Activated CD4-positive, alpha-beta T cell treated with anti-CD3 and anti-CD28 coated beads for 36 hours (primary cell): ENCODE measurements at regions of chr11 and their contacts with region 1.

Region 1: DNA sequence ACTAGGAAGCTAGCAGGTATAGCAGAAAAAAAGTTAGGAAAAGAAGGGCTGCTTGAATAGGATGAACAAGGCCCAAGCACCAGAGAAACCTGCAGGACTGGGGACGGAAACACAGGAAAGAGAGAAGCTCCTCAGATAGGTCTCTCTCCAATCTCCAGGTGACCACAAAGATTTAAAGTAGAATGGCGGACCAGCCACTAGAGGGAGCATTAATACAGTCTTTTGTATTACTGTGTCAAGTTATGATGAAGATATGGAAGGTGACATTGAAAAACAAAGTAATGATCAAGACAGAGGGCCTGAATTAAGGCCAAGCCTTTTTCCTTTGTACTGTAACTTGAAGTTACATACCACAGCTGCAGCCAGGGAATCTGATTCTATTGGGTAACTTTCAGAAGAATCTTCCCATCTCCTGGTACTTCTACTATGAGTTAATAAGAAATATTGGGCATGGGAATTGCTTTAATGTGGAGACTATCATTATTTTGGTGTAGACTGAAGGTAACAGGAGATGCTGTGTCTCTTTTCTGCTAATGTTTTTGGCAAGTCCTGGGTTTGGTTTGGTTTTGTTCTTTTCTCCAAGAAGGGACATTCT is 33.8 kb downstream of the OR2AG2 start:
- DNase-seq: peak; percentile 76
- ATAC-seq: peak; percentile 52
- H3K4me3 Mint-ChIP-seq: no peak overlapping the region
- H3K27ac Mint-ChIP-seq: peak overlapping the region; percentile 73
- H3K4me1 Mint-ChIP-seq: peaks cover 94% of the 10 kb centered on the region
- H3K27me3 Mint-ChIP-seq: no peaks in the 10 kb centered on the region

Region 2: DNA sequence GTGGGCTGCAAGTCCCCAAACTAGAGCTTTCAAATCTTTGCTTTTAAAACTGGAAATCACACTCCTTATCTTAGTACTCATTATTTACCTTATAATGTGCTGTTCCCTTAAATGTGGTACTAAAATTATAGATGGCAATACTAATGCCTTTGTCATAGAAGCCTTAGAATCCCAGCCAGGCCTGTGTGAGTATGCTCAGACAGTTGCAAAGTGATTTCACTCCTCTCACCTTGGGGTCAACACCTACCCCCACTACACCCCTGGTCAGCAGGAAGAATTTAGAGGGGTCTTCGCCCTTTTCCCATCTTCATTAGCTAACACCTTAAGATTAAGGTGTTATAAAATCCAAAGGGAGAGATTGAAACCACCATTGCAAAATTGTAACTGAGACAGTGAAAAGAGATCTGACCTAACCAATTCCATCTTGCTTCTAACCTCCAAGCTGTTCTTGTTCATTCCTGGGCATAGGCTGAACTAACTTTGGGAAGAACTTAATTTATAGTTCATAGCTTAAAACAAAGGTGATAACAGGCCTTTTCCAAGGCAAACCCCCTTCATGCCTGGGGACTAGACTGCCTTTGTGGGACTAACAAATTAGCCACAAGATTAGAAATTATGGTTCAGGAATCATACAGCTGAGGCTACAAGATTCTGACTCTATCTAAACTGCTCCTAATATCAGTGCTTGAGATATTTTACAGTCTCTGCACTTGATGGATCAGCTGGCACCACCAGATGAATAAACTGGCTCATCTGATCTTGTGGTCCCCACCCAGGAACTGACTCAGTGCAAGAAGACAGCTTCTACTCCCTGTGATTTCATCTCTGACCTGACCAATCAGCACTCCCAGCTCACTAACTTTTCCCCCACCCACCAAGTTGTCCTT is 44.4 kb before region 1 on chr11:
- CTCF ChIA-PET with region 1: interaction called, 11 read pairs
- POLR2A ChIA-PET with region 1: no interaction called
- intact Hi-C with region 1: no loop called
- DNase-seq: peak; percentile 75
- ATAC-seq: peak; percentile 92
- H3K4me3 Mint-ChIP-seq: no peak overlapping the region
- H3K27ac Mint-ChIP-seq: peak overlapping the region; percentile 20
- H3K4me1 Mint-ChIP-seq: peaks cover 32% of the 10 kb centered on the region
- H3K27me3 Mint-ChIP-seq: no peaks in the 10 kb centered on the region

Region 3: DNA sequence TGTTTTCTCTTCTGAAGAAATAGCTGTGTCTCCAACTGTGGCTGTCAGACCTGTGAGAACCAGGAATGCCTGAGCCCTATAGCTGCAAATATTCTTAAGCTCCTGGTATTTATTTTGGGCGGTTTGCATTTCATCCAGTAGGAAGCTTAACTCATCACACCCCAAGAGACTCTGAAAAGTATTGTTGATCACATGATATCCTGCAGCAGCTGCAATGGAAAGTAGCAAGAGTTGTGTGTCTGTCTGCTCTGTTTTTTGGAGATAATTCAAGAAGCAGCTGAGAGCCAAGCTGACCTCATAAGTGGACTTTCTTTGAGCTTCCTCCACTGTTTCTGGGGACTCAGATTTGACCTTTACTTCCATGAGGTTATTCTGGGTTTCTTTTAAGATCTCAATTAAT is 18.4 kb before region 1 on chr11:
- CTCF ChIA-PET with region 1: interaction called, 57 read pairs
- POLR2A ChIA-PET with region 1: interaction called, 3 read pairs
- intact Hi-C with region 1: no loop called
- DNase-seq: no peak
- ATAC-seq: no peak
- H3K4me3 Mint-ChIP-seq: no peak overlapping the region
- H3K27ac Mint-ChIP-seq: no peak overlapping the region
- H3K4me1 Mint-ChIP-seq: peaks cover 46% of the 10 kb centered on the region
- H3K27me3 Mint-ChIP-seq: no peaks in the 10 kb centered on the region